ENCODE measurements at regions of chr19 and their contacts with region 1.

Region 1: GRCh38 chr19:1605236-1606137 is at the start of gene UQCR11:
- DNase-seq: peak; percentile 88
- H3K4me3 Mint-ChIP-seq: peak within 1 kb of the TSS; percentile 98
- H3K27ac Mint-ChIP-seq: peak within 1 kb of the TSS; percentile 100
- H3K4me1 Mint-ChIP-seq: peaks cover 27% of the 10 kb centered on the region
- H3K27me3 Mint-ChIP-seq: no peaks in the 10 kb centered on the region
- total RNA-seq, gene UQCR11: 171 and 176 TPM in 2 replicates

Region 2: GRCh38 chr19:1560286-1560882 is 45.1 kb before region 1 on chr19:
- intact Hi-C with region 1: no loop called
- DNase-seq: no peak
- H3K4me3 Mint-ChIP-seq: no peak overlapping the region
- H3K27ac Mint-ChIP-seq: no peak overlapping the region
- H3K4me1 Mint-ChIP-seq: no peaks in the 10 kb centered on the region
- H3K27me3 Mint-ChIP-seq: peaks cover 3% of the 10 kb centered on the region

Region 3: GRCh38 chr19:1592755-1593500 is 12.6 kb before region 1 on chr19 and contains the start of gene MBD3:
- intact Hi-C with region 1: loop called (anchors 1 kb)
- DNase-seq: peak; percentile 87
- H3K4me3 Mint-ChIP-seq: peak within 1 kb of the TSS; percentile 91
- H3K27ac Mint-ChIP-seq: peak within 1 kb of the TSS; percentile 91
- H3K4me1 Mint-ChIP-seq: peaks cover 20% of the 10 kb centered on the region
- H3K27me3 Mint-ChIP-seq: no peaks in the 10 kb centered on the region
- total RNA-seq, gene MBD3: 136 and 139 TPM in 2 replicates

Region 4: DNA sequence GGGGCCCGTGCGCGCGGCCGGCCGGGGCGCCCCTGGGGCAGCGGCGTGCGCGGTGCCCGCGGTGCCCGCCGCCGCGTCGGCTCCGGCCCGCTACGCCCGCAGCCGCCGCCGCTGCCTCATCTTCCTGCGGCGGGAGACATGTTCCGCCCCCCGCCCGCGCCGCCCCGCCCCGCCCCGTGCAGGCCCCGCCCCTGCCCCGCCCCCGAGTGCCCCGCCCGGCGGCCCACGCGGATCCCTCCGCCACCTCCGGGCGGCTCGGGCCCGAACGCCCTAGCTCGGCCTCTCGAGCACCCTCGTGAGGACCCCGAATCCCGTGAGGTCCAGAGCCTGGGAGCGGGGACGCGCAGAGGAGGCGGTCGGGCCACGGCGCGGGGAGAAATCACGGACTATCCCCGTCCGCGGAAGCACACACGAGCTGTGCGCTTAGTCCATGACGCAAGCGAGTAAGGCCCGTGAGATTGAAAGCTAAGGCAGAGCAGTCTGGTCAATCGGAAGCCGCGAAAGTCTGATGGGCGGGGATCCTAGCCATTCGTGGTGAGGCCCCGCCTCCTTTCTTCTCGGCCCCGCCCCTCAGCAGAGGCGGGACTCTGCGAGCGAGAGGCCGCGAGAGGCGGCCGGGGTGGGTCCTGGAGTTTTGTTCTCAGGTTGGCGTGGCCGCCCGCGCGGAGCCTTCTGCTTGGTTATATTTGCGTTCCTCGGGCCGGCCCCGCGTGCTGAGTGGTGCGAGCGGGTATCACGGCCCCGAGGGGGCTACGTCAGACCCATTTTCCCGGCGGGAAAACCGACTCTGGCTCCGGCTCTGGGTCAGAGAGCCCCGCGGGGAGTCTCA is 47.2 kb after region 1 on chr19 and contains the start of gene TCF3:
- intact Hi-C with region 1: loop called (anchors 1 kb)
- DNase-seq: peak; percentile 98
- H3K4me3 Mint-ChIP-seq: peak within 1 kb of the TSS; percentile 95
- H3K27ac Mint-ChIP-seq: peak within 1 kb of the TSS; percentile 97
- H3K4me1 Mint-ChIP-seq: peaks cover 16% of the 10 kb centered on the region
- H3K27me3 Mint-ChIP-seq: peaks cover 1% of the 10 kb centered on the region
- total RNA-seq, gene TCF3: 163 and 172 TPM in 2 replicates

Region 5: DNA sequence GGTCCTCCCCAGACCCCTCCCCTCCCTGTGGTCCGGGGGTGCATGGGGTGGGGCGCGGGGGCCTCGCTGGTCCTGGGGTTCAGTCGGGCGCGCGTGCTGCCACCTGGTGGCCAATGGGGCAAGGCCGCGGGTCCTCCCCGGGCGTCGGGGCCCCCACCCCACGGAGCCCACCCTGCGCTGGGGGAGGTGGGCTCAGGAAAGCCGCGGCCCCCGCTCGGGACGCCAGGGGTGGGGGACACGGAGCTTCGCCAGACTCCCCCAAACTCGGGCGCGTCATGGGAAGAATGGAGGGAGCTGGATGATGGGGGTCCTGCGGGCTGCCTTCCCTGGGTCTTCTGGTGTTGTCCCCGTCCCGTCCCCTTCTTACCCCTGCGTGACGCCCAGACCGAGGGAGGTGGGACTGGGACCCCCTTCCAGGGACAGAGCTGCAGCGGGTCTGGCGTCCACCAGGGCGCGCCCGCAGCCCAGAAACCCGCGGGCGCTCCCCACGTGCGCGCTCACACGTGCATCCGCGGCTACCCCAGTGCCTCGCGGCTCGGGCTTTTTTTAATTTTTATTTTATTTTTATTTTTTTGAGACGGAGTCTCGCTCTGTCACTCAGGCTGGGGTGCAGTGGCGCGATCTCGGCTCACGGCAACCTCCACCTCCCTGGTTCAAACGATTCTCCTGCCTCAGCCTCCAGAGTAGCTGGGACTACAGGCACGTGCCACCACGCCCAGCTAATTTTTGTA is 66.7 kb after region 1 on chr19:
- intact Hi-C with region 1: loop called (anchors 1 kb)
- DNase-seq: peak; percentile 46
- H3K4me3 Mint-ChIP-seq: no peak overlapping the region
- H3K27ac Mint-ChIP-seq: no peak overlapping the region
- H3K4me1 Mint-ChIP-seq: peaks cover 5% of the 10 kb centered on the region
- H3K27me3 Mint-ChIP-seq: peaks cover 48% of the 10 kb centered on the region

Region 6: GRCh38 chr19:1812469-1813196 is 207.1 kb after region 1 on chr19:
- intact Hi-C with region 1: loop called (anchors 1 kb)
- DNase-seq: peak; percentile 92
- H3K4me3 Mint-ChIP-seq: peak overlapping the region; percentile 93
- H3K27ac Mint-ChIP-seq: peak overlapping the region; percentile 97
- H3K4me1 Mint-ChIP-seq: peaks cover 18% of the 10 kb centered on the region
- H3K27me3 Mint-ChIP-seq: no peaks in the 10 kb centered on the region